ENCODE measurements at regions of chr7 and their contacts with region 1.

Region 1: GRCh38 chr7:12695965-12696364 is 8.5 kb downstream of the ARL4A start:
- DNase-seq: no peak

Region 2: DNA sequence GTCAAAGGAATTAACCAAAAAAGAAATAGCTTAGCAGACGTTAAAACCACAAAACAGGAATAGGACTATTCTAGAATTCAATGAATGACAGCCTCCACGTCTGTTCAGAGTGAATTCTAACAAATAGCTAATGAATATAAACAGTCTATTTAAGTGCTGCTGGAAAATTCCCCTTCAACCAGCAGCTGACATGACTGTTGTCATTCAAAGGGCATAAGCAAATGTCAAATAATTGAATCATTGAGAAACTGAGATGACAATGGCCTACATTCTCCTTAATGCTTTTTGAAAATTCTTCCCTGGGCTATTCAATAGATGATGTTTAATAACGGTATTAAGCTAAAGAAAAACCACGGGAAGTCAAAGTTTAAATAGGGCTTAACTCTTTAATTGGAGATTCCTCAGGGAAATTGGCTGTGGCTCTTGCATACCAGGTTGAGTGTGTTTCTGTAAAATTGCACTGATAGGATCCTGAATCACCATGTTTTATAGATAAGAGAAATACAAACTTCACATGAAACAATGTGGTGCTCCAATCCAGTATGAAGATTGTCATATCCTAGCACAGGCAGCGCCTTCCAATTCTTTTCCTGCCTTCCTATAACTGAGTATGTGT is 68.5 kb after region 1 on chr7:
- intact Hi-C with region 1: loop called (anchors 10 kb)
- DNase-seq: no peak

Measured in posterior cingulate gyrus (tissue), 11 donors.